ENCODE measurements at regions of chr21 and their contacts with region 1.

Region 1: DNA sequence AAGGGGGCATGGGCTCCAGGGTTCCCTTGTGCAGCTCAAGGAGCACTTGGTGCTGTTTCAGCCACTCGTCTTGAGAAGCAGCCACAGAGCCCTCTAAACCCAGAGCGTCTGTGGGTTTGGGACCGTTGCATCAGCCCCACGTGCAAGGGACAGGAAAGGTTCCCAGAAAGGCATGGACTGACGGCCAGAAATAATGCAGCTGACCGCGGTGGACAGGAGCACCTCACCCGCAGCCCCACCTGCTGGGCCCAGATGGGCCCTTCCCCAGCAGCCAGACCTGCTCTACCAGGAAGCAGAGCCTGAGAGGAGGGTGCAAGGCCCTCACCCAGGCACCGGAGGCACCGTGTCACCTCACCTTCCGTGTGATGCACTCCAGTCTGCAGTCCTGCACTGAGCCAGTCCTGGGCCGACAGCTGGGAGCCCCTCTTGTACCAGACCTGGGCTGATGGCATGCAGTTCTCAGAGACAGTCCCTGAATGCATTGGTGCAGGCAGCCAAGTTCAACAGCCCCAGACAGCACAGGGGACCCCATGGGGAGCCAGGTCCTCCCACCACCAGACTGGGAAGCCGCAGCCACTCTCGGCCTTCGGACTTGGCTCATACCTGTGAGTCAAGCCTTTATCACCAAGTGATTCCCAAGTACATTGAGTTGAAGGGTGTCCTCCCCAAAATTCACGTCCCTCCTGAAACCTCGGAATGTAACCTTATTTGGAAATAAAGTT is 4.8 kb upstream of the TFF3 start:
- DNase-seq: no peak
- H3K4me3 ChIP-seq: no peak overlapping the region
- H3K27ac ChIP-seq: peak overlapping the region in 3 of 4 donors; percentile 2 to 52 (median 28)
- H3K4me1 ChIP-seq: peaks cover 0 to 30% (median 22%) of the 10 kb centered on the region in 4 donors
- H3K27me3 ChIP-seq: peaks cover under 1% of the 10 kb centered on the region
- CTCF ChIP-seq: peak in 1 of 5 experiments; percentile 5
- EP300 ChIP-seq: no peak
- POLR2A ChIP-seq: no peak

Region 2: DNA sequence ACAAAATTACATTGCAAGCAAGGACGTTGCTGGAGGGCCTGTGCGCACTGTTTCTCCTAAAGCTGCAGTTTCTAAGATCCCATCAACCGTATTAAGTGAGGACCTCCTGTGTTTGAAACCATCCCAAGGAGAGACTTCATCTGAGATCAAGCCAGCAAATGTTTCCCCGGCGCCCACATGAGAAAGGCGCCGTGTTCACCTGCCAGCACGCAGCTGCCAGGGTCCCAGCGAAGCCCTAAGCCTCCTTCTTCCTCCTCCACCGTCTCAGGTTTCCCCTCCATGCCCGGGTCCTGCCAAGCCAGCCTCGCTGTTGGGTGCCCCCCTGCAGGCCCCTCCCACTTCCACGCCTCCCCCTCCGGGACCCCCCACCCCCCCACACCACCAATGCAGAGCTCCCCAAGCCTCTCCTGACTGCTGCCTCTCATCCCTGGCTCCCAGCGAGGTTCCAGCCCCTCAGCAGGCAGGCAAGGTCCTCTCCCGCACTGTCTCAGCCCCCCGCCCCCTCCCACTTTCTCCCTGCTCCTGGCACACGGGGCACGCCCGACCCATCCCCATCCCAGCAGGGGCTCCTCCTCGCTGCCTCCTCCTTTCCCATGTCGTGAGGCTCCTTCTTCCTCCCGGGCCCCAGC is 55.0 kb after region 1 on chr21:
- in situ Hi-C with region 1: loop called in 1 of 4 experiments (anchors 5 kb)
- intact Hi-C with region 1: no loop called
- DNase-seq: no peak
- H3K4me3 ChIP-seq: peak overlapping the region in 1 of 4 donors; percentile 13
- H3K27ac ChIP-seq: peak overlapping the region; percentile 41 to 71 (median 62)
- H3K4me1 ChIP-seq: peaks cover 0 to 21% (median 16%) of the 10 kb centered on the region in 4 donors
- H3K27me3 ChIP-seq: no peaks in the 10 kb centered on the region
- CTCF ChIP-seq: no peak
- EP300 ChIP-seq: no peak
- POLR2A ChIP-seq: no peak

Region 3: GRCh38 chr21:42721341-42721824 is 401.4 kb after region 1 on chr21:
- in situ Hi-C with region 1: no loop called
- intact Hi-C with region 1: no loop called
- DNase-seq: peak; percentile 72
- H3K4me3 ChIP-seq: peak overlapping the region in 1 of 4 donors; percentile 0
- H3K27ac ChIP-seq: peak overlapping the region; percentile 85 to 87 (median 86)
- H3K4me1 ChIP-seq: peaks cover 28 to 62% (median 48%) of the 10 kb centered on the region in 4 donors
- H3K27me3 ChIP-seq: no peaks in the 10 kb centered on the region
- CTCF ChIP-seq: peak in 1 of 5 experiments; percentile 21
- EP300 ChIP-seq: peak; percentile 98
- POLR2A ChIP-seq: peak; percentile 40

Measured in transverse colon (tissue), 4 donors.